ENCODE measurements at regions of chr10 and their contacts with region 1.

Region 1: DNA sequence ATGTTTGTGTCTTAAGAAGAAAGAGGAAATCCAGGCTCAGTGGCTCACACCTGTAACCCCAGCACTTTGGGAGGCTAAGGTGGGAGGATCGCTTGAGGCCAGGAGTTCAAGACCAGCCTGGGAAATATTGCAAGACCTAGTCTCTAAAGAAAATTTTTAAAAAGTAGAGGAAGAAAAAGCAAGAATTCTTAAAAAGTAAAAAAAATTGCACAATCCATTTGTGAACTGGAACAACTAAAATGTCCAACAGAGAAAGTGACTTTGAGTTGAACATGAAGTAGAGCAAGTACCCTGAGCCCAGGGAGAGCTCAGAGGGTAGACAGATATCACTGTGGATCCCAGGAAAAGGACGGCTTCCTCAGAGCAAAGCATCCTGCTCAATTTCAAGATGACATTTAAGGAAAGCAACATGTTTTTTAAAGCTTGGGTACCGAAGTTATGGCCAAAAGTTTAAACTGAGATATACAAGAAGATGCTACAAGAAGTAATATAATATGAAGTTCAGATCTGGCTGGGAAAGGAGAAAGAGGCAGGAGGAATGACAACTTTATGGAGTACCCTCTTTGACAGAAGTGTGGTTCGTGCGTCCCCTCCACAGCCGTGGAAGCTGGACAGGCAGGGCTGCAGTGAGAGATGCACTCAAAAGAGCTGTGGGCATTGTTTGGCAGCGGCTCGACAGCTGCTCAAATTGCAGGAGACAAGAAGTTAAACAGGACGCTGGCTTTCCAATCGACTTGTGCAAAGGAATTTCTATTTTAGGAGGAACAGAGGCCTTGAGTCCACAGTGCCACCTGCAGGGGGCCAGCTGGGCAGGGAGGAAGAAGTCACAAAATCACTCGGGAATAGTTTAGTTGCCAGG is 201.3 kb downstream of the JCAD start:
- DNase-seq: peak; percentile 65 to 78 (median 74)
- ATAC-seq: peak; percentile 77 to 94 (median 92)
- H3K4me3 ChIP-seq: no peak overlapping the region
- H3K27ac ChIP-seq: peak overlapping the region in 7 of 12 donors; percentile 9 to 74 (median 33)
- H3K4me1 ChIP-seq: peaks cover 0 to 12% (median 3%) of the 10 kb centered on the region in 12 donors
- H3K27me3 ChIP-seq: no peaks in the 10 kb centered on the region
- CTCF ChIP-seq: peak; percentile 48 to 81 (median 67)
- POLR2A ChIP-seq: no peak

Region 2: DNA sequence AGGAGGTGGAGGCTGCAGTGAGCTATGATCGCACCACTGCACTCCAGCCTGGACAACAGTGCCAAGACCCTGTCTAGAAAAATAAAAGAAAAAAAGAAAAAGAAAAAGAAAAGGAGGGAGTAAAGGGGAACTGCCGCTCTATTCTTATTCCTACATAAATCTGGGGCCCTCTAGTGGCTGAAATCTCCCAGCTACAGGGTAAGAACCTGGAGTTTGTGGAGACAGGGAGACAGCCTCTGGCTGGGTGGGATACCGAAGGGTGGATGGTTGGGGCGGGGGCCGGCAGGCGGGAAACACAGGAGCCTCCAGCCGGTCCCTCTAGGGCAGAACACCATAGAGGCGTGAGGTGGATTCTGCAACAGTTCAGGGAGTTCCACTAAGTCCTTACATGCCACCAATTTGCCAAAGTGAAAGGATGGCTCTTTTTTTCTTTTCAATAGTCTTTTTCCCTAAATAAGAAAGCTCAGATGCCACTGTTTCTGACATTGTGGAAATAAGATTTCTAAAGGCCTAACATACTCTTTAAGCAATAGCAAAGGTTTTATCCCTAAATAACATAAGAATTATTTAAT is 340.6 kb before region 1 on chr10:
- intact Hi-C with region 1: loop called in 1 of 10 experiments (anchors 10 kb)
- DNase-seq: no peak
- ATAC-seq: peak in 3 of 4 donors; percentile 3 to 39 (median 31)
- H3K4me3 ChIP-seq: no peak overlapping the region
- H3K27ac ChIP-seq: peak overlapping the region; percentile 2 to 90 (median 82)
- H3K4me1 ChIP-seq: peaks cover 0 to 38% (median 13%) of the 10 kb centered on the region in 12 donors
- H3K27me3 ChIP-seq: no peaks in the 10 kb centered on the region
- CTCF ChIP-seq: peak; percentile 21 to 60 (median 43)
- POLR2A ChIP-seq: no peak

Region 3: GRCh38 chr10:29635711-29636144 is 222.3 kb before region 1 on chr10:
- intact Hi-C with region 1: loop called in 3 of 10 experiments (anchors 5 to 10 kb)
- DNase-seq: no peak
- ATAC-seq: peak in 3 of 4 donors; percentile 26 to 39 (median 35)
- H3K4me3 ChIP-seq: peak overlapping the region in 6 of 12 donors; percentile 8 to 62 (median 36)
- H3K27ac ChIP-seq: peak overlapping the region; percentile 73 to 94 (median 88)
- H3K4me1 ChIP-seq: peaks cover 3 to 45% (median 20%) of the 10 kb centered on the region in 12 donors
- H3K27me3 ChIP-seq: no peaks in the 10 kb centered on the region
- CTCF ChIP-seq: no peak
- POLR2A ChIP-seq: no peak

Region 4: GRCh38 chr10:29646238-29646902 is 211.7 kb before region 1 on chr10:
- intact Hi-C with region 1: loop called in 2 of 10 experiments (anchors 10 kb)
- DNase-seq: no peak
- ATAC-seq: peak in 2 of 4 donors; percentile 2 to 11
- H3K4me3 ChIP-seq: peak overlapping the region in 1 of 12 donors; percentile 5
- H3K27ac ChIP-seq: peak overlapping the region; percentile 19 to 86 (median 52)
- H3K4me1 ChIP-seq: peaks cover 0 to 73% (median 43%) of the 10 kb centered on the region in 12 donors
- H3K27me3 ChIP-seq: no peaks in the 10 kb centered on the region
- CTCF ChIP-seq: no peak
- POLR2A ChIP-seq: no peak

Region 5: GRCh38 chr10:29669149-29669548 is 188.9 kb before region 1 on chr10:
- intact Hi-C with region 1: no loop called
- DNase-seq: peak in 4 of 5 donors; percentile 41 to 74 (median 57)
- ATAC-seq: peak; percentile 43 to 93 (median 82)
- H3K4me3 ChIP-seq: no peak overlapping the region
- H3K27ac ChIP-seq: peak overlapping the region in 3 of 12 donors; percentile 14 to 36 (median 32)
- H3K4me1 ChIP-seq: peaks cover 0 to 30% (median 8%) of the 10 kb centered on the region in 12 donors
- H3K27me3 ChIP-seq: no peaks in the 10 kb centered on the region
- CTCF ChIP-seq: peak in 4 of 12 donors; percentile 17 to 35 (median 28)
- POLR2A ChIP-seq: no peak

Region 6: GRCh38 chr10:29784175-29784773 is 73.8 kb before region 1 on chr10:
- intact Hi-C with region 1: loop called in 1 of 10 experiments (anchors 2 kb)
- DNase-seq: peak in 3 of 5 donors; percentile 58 to 75 (median 61)
- ATAC-seq: peak; percentile 95 to 99 (median 98)
- H3K4me3 ChIP-seq: no peak overlapping the region
- H3K27ac ChIP-seq: peak overlapping the region in 11 of 12 donors; percentile 2 to 75 (median 64)
- H3K4me1 ChIP-seq: peaks cover 0 to 19% (median 10%) of the 10 kb centered on the region in 12 donors
- H3K27me3 ChIP-seq: no peaks in the 10 kb centered on the region
- CTCF ChIP-seq: no peak
- POLR2A ChIP-seq: no peak

Region 7: GRCh38 chr10:30118590-30118989 is 260.5 kb after region 1 on chr10:
- intact Hi-C with region 1: no loop called
- DNase-seq: no peak
- ATAC-seq: no peak
- H3K4me3 ChIP-seq: no peak overlapping the region
- H3K27ac ChIP-seq: no peak overlapping the region
- H3K4me1 ChIP-seq: peaks cover 0 to 20% (median 10%) of the 10 kb centered on the region in 12 donors
- H3K27me3 ChIP-seq: no peaks in the 10 kb centered on the region
- CTCF ChIP-seq: no peak
- POLR2A ChIP-seq: no peak

Measured in heart left ventricle (tissue), 16 donors.